Activated CD8-positive, alpha-beta memory T cell treated with anti-CD3 and anti-CD28 coated beads, Interleukin-2, amount 10 ng/mL, durations not matched to agents 7 days and 5 days (primary cell): ENCODE measurements at regions of chr10 and their contacts with region 1.

Region 1: GRCh38 chr10:43348511-43349312 is 22.7 kb upstream of the FXYD4 start:
- DNase-seq: peak; percentile 93
- ATAC-seq: peak; percentile 100
- H3K4me3 Mint-ChIP-seq: no peak overlapping the region
- H3K27ac Mint-ChIP-seq: peak overlapping the region; percentile 58
- H3K4me1 Mint-ChIP-seq: peaks cover 24% of the 10 kb centered on the region
- H3K27me3 Mint-ChIP-seq: peaks cover 20% of the 10 kb centered on the region

Region 2: GRCh38 chr10:43255634-43256431 is 92.9 kb before region 1 on chr10:
- CTCF ChIA-PET with region 1: interaction called, 11 read pairs
- DNase-seq: peak; percentile 75
- ATAC-seq: peak; percentile 84
- H3K4me3 Mint-ChIP-seq: no peak overlapping the region
- H3K27ac Mint-ChIP-seq: peak overlapping the region; percentile 74
- H3K4me1 Mint-ChIP-seq: peaks cover 9% of the 10 kb centered on the region
- H3K27me3 Mint-ChIP-seq: no peaks in the 10 kb centered on the region

Region 3: GRCh38 chr10:43265799-43266721 is 82.7 kb before region 1 on chr10:
- CTCF ChIA-PET with region 1: interaction called, 19 read pairs
- DNase-seq: peak; percentile 68
- ATAC-seq: peak; percentile 79
- H3K4me3 Mint-ChIP-seq: peak overlapping the region; percentile 58
- H3K27ac Mint-ChIP-seq: no peak overlapping the region
- H3K4me1 Mint-ChIP-seq: peaks cover 8% of the 10 kb centered on the region
- H3K27me3 Mint-ChIP-seq: peaks cover 57% of the 10 kb centered on the region

Region 4: GRCh38 chr10:43287056-43288007 is 61.4 kb before region 1 on chr10:
- CTCF ChIA-PET with region 1: interaction called, 153 read pairs
- DNase-seq: peak; percentile 89
- ATAC-seq: peak; percentile 92
- H3K4me3 Mint-ChIP-seq: peak overlapping the region; percentile 12
- H3K27ac Mint-ChIP-seq: peak overlapping the region; percentile 80
- H3K4me1 Mint-ChIP-seq: peaks cover 38% of the 10 kb centered on the region
- H3K27me3 Mint-ChIP-seq: peaks cover 9% of the 10 kb centered on the region

Region 5: GRCh38 chr10:43322769-43323168 is 25.9 kb before region 1 on chr10:
- CTCF ChIA-PET with region 1: interaction called, 11 read pairs
- DNase-seq: peak; percentile 94
- ATAC-seq: peak; percentile 100
- H3K4me3 Mint-ChIP-seq: peak overlapping the region; percentile 11
- H3K27ac Mint-ChIP-seq: peak overlapping the region; percentile 25
- H3K4me1 Mint-ChIP-seq: peaks cover 23% of the 10 kb centered on the region
- H3K27me3 Mint-ChIP-seq: peaks cover 6% of the 10 kb centered on the region